ENCODE measurements at regions of chr14 and their contacts with region 1.

Region 1: DNA sequence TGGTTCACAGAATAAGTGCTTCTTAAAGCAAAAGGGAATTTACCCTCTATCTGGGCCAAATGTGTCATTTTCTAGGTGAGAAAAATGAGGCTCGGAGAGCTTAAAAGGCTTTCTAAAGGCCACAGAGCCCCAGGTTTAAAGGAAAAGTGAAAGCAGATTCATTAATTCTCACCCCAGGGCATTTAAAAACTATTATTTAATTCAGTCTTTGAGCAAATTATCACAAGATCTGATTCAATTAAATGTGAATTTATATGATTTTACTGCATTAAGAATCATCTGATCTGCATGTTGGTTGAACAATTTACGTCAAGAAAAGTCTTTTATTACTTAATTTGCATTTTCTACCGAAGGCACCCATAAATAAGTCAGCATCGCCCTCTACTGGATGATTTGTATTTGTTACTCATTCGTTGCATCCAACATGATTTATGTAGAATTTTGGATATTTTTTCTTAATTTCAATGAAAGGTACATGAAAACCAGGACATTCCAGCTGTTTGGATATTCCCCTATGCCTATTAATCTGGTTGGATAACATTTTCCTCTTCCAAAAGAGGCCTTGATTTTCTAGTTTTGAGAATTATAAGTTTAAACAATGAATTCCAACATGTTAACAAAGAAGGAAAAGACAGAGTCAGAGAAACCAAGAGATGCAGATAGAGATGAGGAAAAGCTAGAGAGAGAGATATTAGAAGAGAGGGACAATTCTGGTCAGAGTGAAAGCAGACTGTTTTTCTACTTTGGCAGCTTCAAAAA is 19.1 kb upstream of the DHRS7 start:
- DNase-seq: no peak
- H3K4me3 ChIP-seq: peak overlapping the region; percentile 29
- H3K27ac ChIP-seq: no peak overlapping the region
- H3K4me1 ChIP-seq: no peaks in the 10 kb centered on the region
- H3K27me3 ChIP-seq: no peaks in the 10 kb centered on the region
- CTCF ChIP-seq: peak; percentile 65

Region 2: DNA sequence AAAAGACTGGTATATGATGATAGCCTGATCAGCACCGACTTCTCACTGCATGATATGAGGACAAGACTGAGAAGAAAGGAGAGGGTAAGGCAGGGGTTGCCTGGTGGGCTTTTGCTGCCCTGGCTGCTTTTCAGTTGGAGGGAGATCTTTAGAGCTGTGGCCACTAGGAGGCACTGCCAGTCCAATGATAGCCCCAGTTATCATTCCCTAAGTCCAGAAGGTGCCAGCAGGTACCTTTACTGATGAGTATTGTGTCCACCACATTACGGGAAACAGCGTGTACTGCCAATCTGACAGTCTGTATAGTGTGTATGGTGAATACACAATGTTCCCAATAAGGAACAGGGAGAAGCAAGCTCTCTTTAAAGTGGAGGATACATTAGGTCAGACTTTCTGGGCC is 551.9 kb before region 1 on chr14:
- intact Hi-C with region 1: loop called (anchors 10 kb)
- DNase-seq: peak; percentile 43
- H3K4me3 ChIP-seq: no peak overlapping the region
- H3K27ac ChIP-seq: no peak overlapping the region
- H3K4me1 ChIP-seq: no peaks in the 10 kb centered on the region
- H3K27me3 ChIP-seq: peaks cover 15% of the 10 kb centered on the region
- CTCF ChIP-seq: peak; percentile 44

Region 3: GRCh38 chr14:59707778-59708561 is 476.4 kb before region 1 on chr14:
- intact Hi-C with region 1: loop called (anchors 10 kb)
- DNase-seq: no peak
- H3K4me3 ChIP-seq: no peak overlapping the region
- H3K27ac ChIP-seq: no peak overlapping the region
- H3K4me1 ChIP-seq: no peaks in the 10 kb centered on the region
- H3K27me3 ChIP-seq: no peaks in the 10 kb centered on the region
- CTCF ChIP-seq: no peak

Region 4: GRCh38 chr14:59918824-59919569 is 265.3 kb before region 1 on chr14:
- intact Hi-C with region 1: no loop called
- DNase-seq: no peak
- H3K4me3 ChIP-seq: peak overlapping the region; percentile 23
- H3K27ac ChIP-seq: no peak overlapping the region
- H3K4me1 ChIP-seq: peaks cover 5% of the 10 kb centered on the region
- H3K27me3 ChIP-seq: peaks cover 15% of the 10 kb centered on the region
- CTCF ChIP-seq: peak; percentile 32

Region 5: GRCh38 chr14:59964251-59965007 is 219.9 kb before region 1 on chr14:
- intact Hi-C with region 1: loop called (anchors 2 kb)
- DNase-seq: no peak
- H3K4me3 ChIP-seq: no peak overlapping the region
- H3K27ac ChIP-seq: no peak overlapping the region
- H3K4me1 ChIP-seq: no peaks in the 10 kb centered on the region
- H3K27me3 ChIP-seq: no peaks in the 10 kb centered on the region
- CTCF ChIP-seq: no peak

Region 6: GRCh38 chr14:60064491-60065072 is 119.7 kb before region 1 on chr14:
- intact Hi-C with region 1: loop called (anchors 5 kb)
- DNase-seq: no peak
- H3K4me3 ChIP-seq: no peak overlapping the region
- H3K27ac ChIP-seq: no peak overlapping the region
- H3K4me1 ChIP-seq: no peaks in the 10 kb centered on the region
- H3K27me3 ChIP-seq: no peaks in the 10 kb centered on the region
- CTCF ChIP-seq: peak; percentile 46

Region 7: GRCh38 chr14:60304509-60304908 is 120.2 kb after region 1 on chr14:
- intact Hi-C with region 1: no loop called
- DNase-seq: no peak
- H3K4me3 ChIP-seq: no peak overlapping the region
- H3K27ac ChIP-seq: no peak overlapping the region
- H3K4me1 ChIP-seq: no peaks in the 10 kb centered on the region
- H3K27me3 ChIP-seq: no peaks in the 10 kb centered on the region
- CTCF ChIP-seq: no peak

Measured in colonic mucosa (tissue), 4 donors.